Testis (tissue), 5 donors: ENCODE measurements at regions of chr17 and their contacts with region 1.

Region 1: DNA sequence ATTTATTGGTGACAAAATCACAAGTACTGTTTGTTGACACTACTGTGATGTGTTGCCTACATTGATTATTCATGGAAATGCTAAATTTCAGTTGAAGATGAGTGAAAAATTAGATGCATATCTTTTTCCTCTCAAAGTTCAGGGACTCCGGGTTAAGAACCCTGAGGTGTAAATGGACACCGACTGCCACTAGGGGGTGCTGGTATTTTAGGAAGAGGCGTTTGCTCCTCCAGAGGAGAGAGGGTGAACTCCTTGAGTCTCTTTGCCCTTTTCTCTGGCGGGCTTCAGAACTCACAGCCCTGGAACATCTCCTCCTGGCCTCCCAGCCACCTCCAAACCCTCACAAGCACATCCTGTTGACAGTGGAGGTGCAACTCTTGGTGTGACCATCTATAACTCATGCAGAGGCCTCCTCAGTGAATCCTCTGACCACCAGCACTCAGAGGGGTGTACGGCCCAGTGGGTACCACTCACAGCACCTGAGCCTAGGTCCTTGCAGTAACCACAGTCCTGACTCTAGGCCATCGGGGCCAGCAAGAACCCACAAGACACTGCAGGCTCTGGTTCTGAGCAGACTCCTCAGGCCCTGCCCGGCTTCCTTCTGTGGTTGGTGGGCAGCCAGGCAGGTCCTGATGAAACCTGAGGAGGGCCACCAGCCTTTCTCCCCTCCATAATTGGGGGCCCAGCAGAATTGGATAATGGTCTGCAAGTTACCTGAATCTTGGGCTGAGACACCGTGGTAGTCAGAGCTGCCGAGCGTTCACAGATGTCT is 26.2 kb upstream of the PIK3R5 start:
- DNase-seq: peak; percentile 78
- H3K4me3 ChIP-seq: no peak overlapping the region
- H3K27ac ChIP-seq: no peak overlapping the region
- H3K4me1 ChIP-seq: no peaks in the 10 kb centered on the region
- H3K27me3 ChIP-seq: no peaks in the 10 kb centered on the region
- CTCF ChIP-seq: peak; percentile 61 to 82 (median 70)
- POLR2A ChIP-seq: no peak

Region 2: DNA sequence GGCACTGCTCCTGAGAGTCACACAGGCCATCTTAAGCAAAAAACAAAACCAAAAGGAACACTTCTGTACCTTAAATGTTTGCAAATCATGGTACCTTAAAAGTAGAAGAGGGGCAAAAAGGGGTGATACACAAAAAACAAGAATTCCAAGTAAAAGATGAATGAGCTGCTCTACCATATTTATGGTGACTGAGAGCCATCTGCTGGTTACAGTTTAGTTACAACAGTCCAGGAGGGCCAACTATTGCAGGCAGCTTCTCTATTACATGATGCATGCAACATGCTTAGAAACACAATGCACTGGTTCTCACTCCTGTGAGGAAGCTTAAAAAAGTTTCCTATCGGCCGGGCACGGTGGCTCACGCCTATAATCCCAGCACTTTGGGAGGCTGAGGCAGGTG is 530.4 kb after region 1 on chr17:
- intact Hi-C with region 1: loop called (anchors 10 kb)
- DNase-seq: peak; percentile 22
- H3K4me3 ChIP-seq: no peak overlapping the region
- H3K27ac ChIP-seq: no peak overlapping the region
- H3K4me1 ChIP-seq: no peaks in the 10 kb centered on the region
- H3K27me3 ChIP-seq: no peaks in the 10 kb centered on the region
- CTCF ChIP-seq: peak; percentile 17 to 50 (median 32)
- POLR2A ChIP-seq: no peak